ENCODE measurements at regions of chr12 and their contacts with region 1.

Region 1: GRCh38 chr12:6613776-6614512 is 6.8 kb upstream of the CHD4 start:
- DNase-seq: no peak
- ATAC-seq: peak; percentile 68
- H3K4me3 ChIP-seq: no peak overlapping the region
- H3K27ac ChIP-seq: no peak overlapping the region; the same call in 1 of the 2 replicates
- H3K4me1 ChIP-seq: peaks cover 28% of the 10 kb centered on the region
- H3K27me3 ChIP-seq: no peaks in the 10 kb centered on the region
- CTCF ChIP-seq: peak; percentile 12 to 20 (median 17); a peak in 3 of 6 replicates
- EP300 ChIP-seq: no peak
- POLR2A ChIP-seq: peak; percentile 44; the same call in 1 of the 2 replicates
- RAD21 ChIP-seq: no peak

Region 2: GRCh38 chr12:6632026-6632983 is 18.4 kb after region 1 on chr12:
- CTCF ChIA-PET with region 1: interaction called, 7 read pairs
- POLR2A ChIA-PET with region 1: interaction called, 11 read pairs
- RAD21 ChIA-PET with region 1: interaction called, 13 read pairs
- SMC1A ChIA-PET with region 1: interaction called, 5 read pairs
- in situ Hi-C with region 1: no loop called
- intact Hi-C with region 1: no loop called
- DNase-seq: peak; percentile 81
- ATAC-seq: peak; percentile 78
- H3K4me3 ChIP-seq: peak overlapping the region; percentile 57
- H3K27ac ChIP-seq: peak overlapping the region; percentile 90
- H3K4me1 ChIP-seq: peaks cover 52% of the 10 kb centered on the region
- H3K27me3 ChIP-seq: no peaks in the 10 kb centered on the region
- CTCF ChIP-seq: no peak
- EP300 ChIP-seq: peak in 1 of 2 experiments; percentile 12; a peak in 1 of 4 replicates
- POLR2A ChIP-seq: peak; percentile 85
- RAD21 ChIP-seq: no peak

Region 3: GRCh38 chr12:6647083-6647604 is 33.2 kb after region 1 on chr12 and contains the start of gene ACRBP:
- CTCF ChIA-PET with region 1: interaction called, 23 read pairs
- POLR2A ChIA-PET with region 1: interaction called, 4 read pairs
- RAD21 ChIA-PET with region 1: interaction called, 9 read pairs
- SMC1A ChIA-PET with region 1: interaction called, 16 read pairs
- in situ Hi-C with region 1: no loop called
- intact Hi-C with region 1: no loop called
- DNase-seq: no peak
- ATAC-seq: peak; percentile 93
- H3K4me3 ChIP-seq: peak within 1 kb of the TSS; percentile 49
- H3K27ac ChIP-seq: no peak within 1 kb of the TSS; the same call in 1 of the 2 replicates
- H3K4me1 ChIP-seq: peaks cover 14% of the 10 kb centered on the region
- H3K27me3 ChIP-seq: no peaks in the 10 kb centered on the region
- CTCF ChIP-seq: no peak
- EP300 ChIP-seq: no peak
- POLR2A ChIP-seq: peak; percentile 19; the same call in 1 of the 2 replicates
- RAD21 ChIP-seq: no peak
- polyA plus RNA-seq, gene ACRBP: 0.64 to 0.80 TPM

Region 4: GRCh38 chr12:6662906-6663742 is 49.2 kb after region 1 on chr12 and contains the start of gene ING4:
- CTCF ChIA-PET with region 1: no interaction called
- POLR2A ChIA-PET with region 1: no interaction called
- RAD21 ChIA-PET with region 1: interaction called, 4 read pairs
- SMC1A ChIA-PET with region 1: interaction called, 3 read pairs
- in situ Hi-C with region 1: no loop called
- intact Hi-C with region 1: loop called (anchors 5 kb)
- DNase-seq: peak; percentile 96
- ATAC-seq: peak; percentile 100
- H3K4me3 ChIP-seq: peak within 1 kb of the TSS; percentile 96
- H3K27ac ChIP-seq: peak within 1 kb of the TSS; percentile 80
- H3K4me1 ChIP-seq: no peaks in the 10 kb centered on the region; the same call in 1 of the 2 replicates
- H3K27me3 ChIP-seq: no peaks in the 10 kb centered on the region
- CTCF ChIP-seq: no peak
- EP300 ChIP-seq: peak in 1 of 2 experiments; percentile 50; a peak in 1 of 4 replicates
- POLR2A ChIP-seq: peak; percentile 68
- RAD21 ChIP-seq: no peak
- polyA plus RNA-seq, gene ING4: 7.2 to 8.9 TPM

Region 5: DNA sequence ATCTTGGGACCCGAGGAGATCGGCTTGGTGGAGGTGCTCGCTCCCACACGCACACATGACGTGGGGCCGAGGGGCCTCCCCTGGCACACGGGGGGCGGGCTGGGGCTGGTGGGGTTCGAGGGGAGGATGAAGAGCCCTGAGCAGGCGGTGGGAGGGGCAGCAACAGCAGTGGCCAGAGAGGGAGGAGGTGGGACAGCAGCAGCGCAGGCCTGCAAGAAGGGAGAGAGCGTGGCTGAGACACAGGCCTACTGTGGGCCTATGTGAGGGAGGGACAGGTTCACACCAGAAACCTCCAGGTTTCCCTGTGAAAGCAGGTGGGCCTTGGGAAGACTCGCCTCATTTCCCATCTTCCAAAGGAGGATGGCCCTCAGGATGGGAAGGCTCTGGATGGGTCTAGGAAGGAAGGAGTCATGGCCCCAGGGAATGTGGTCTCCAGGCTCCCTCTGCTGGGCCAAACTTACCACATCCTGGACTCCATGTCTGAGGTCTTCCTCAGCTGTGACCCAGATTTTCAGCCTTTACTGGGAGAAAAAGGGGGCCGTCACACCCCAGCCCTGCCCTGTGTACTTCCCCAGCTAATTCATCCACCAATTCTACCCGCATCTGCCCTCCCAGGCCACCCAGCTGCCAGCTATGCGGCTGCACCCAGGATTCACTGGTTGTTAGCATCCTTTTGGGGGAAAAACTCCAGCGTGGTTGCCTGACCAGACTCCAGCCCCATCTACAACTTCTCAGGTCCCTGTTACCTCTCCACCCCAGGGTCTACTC is 83.8 kb after region 1 on chr12:
- CTCF ChIA-PET with region 1: interaction called, 4 read pairs
- POLR2A ChIA-PET with region 1: no interaction called
- RAD21 ChIA-PET with region 1: interaction called, 3 read pairs
- SMC1A ChIA-PET with region 1: no interaction called
- in situ Hi-C with region 1: no loop called
- intact Hi-C with region 1: loop called (anchors 1 kb)
- DNase-seq: no peak
- ATAC-seq: peak; percentile 65
- H3K4me3 ChIP-seq: no peak overlapping the region
- H3K27ac ChIP-seq: no peak overlapping the region
- H3K4me1 ChIP-seq: peaks cover 12% of the 10 kb centered on the region
- H3K27me3 ChIP-seq: peaks cover 13 to 16% of the 10 kb centered on the region in 2 experiments
- CTCF ChIP-seq: peak; percentile 50 to 63 (median 60); a peak in 5 of 6 replicates
- EP300 ChIP-seq: no peak
- POLR2A ChIP-seq: no peak
- RAD21 ChIP-seq: peak; percentile 71

Region 6: GRCh38 chr12:6778574-6779550 is 164.9 kb after region 1 on chr12:
- CTCF ChIA-PET with region 1: interaction called, 4 read pairs
- POLR2A ChIA-PET with region 1: interaction called, 5 read pairs
- RAD21 ChIA-PET with region 1: no interaction called
- SMC1A ChIA-PET with region 1: interaction called, 6 read pairs
- in situ Hi-C with region 1: no loop called
- intact Hi-C with region 1: loop called (anchors 1 kb)
- DNase-seq: peak; percentile 72
- ATAC-seq: peak; percentile 96
- H3K4me3 ChIP-seq: peak overlapping the region; percentile 56
- H3K27ac ChIP-seq: no peak overlapping the region
- H3K4me1 ChIP-seq: peaks cover 29% of the 10 kb centered on the region
- H3K27me3 ChIP-seq: no peaks in the 10 kb centered on the region
- CTCF ChIP-seq: peak; percentile 95 to 99 (median 96); a peak in 5 of 6 replicates
- EP300 ChIP-seq: no peak
- POLR2A ChIP-seq: 0 out of 2 replicates have a peak, but pooled peaks have one; percentile 20
- RAD21 ChIP-seq: peak; percentile 97

Region 7: GRCh38 chr12:6792522-6793201 is 178.7 kb after region 1 on chr12:
- CTCF ChIA-PET with region 1: no interaction called
- POLR2A ChIA-PET with region 1: no interaction called
- RAD21 ChIA-PET with region 1: no interaction called
- SMC1A ChIA-PET with region 1: no interaction called
- in situ Hi-C with region 1: no loop called
- intact Hi-C with region 1: no loop called
- DNase-seq: no peak
- ATAC-seq: peak; percentile 93
- H3K4me3 ChIP-seq: no peak overlapping the region
- H3K27ac ChIP-seq: no peak overlapping the region
- H3K4me1 ChIP-seq: peaks cover 15% of the 10 kb centered on the region
- H3K27me3 ChIP-seq: no peaks in the 10 kb centered on the region; a peak in 1 of 4 replicates
- CTCF ChIP-seq: no peak
- EP300 ChIP-seq: no peak
- POLR2A ChIP-seq: no peak
- RAD21 ChIP-seq: no peak

Region 8: DNA sequence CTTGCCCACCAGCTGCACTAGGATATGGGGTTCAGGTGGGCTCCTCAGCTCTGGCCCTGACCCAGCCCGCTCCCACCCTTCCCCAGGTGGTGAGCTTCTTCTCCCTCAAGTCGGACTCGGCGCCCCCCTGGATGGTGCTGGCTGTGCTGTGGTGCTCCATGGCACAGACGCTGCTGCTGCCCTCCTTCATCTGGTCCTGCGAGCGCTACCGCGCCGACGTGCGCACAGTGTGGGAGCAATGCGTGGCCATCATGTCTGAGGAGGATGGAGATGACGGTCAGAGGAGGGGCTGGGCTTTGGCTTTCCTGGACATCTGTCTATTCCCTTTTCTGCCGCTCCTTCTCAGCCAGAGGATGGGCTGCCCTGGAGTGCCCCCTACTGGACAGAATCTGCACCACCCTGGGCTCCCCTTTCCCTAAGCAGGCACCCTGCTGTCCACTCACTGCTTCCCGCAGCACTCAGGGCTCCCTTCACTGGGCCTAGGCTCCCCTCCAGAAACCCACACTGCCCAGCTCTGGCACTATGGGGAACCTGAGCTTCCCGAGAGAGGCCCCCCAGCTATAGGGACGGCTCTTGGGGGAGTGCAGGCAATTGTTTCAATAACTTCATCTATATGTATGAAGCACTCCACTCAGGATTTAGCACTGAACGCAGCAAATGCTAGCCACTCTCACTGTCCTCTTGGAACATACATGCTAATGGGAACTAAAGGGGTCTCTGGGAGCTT is 211.6 kb after region 1 on chr12:
- CTCF ChIA-PET with region 1: no interaction called
- POLR2A ChIA-PET with region 1: no interaction called
- RAD21 ChIA-PET with region 1: no interaction called
- SMC1A ChIA-PET with region 1: no interaction called
- in situ Hi-C with region 1: no loop called
- intact Hi-C with region 1: loop called (anchors 2 kb)
- DNase-seq: no peak
- ATAC-seq: peak; percentile 88
- H3K4me3 ChIP-seq: no peak overlapping the region
- H3K27ac ChIP-seq: no peak overlapping the region
- H3K4me1 ChIP-seq: peaks cover 4% of the 10 kb centered on the region
- H3K27me3 ChIP-seq: peaks cover 27 to 35% of the 10 kb centered on the region in 2 experiments
- CTCF ChIP-seq: peak; percentile 90 to 96 (median 92)
- EP300 ChIP-seq: no peak
- POLR2A ChIP-seq: no peak
- RAD21 ChIP-seq: peak; percentile 86

Measured in GM12878 (cell line).